ENCODE measurements at regions of chr2 and their contacts with region 1.

Region 1: DNA sequence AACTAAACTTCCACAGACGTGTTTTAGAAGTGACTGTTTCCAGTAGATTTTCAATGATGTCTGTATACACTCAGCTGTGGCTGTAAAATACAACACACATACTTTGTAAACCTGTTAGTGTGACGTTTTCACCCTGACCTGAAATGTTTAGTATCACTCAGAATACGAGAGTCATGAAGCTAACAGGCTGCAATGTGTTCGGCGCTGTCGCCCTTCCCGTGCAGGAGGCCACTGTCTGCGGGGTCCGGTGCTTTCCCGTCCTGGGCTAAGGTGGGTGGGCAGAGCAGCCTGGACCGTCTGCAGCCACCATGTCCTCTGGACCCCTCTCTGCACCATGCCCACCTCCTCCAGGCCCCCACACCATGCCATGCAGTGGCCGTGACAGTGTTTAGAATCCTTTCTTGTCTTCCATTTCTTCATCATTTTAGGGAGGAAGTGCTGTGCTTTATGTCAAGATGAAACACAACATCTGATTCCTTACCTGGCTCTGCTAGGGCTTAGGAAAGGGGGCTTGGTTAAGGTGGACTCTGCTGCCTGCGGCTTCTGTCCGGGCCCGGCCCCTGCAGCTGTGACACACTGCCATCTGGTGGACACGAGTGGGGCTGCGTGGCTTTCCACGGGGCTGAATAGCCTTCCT is 53.8 kb upstream of the RBM44 start:
- DNase-seq: peak; percentile 75 to 86
- H3K4me3 ChIP-seq: no peak overlapping the region
- H3K27ac ChIP-seq: peak overlapping the region; percentile 68 to 77
- H3K4me1 ChIP-seq: peaks cover 4 to 61% (median 45%) of the 10 kb centered on the region in 4 donors
- H3K27me3 ChIP-seq: no peaks in the 10 kb centered on the region
- CTCF ChIP-seq: peak; percentile 96 to 98

Region 2: GRCh38 chr2:237585590-237586221 is 159.0 kb before region 1 on chr2:
- intact Hi-C with region 1: loop called (anchors 2 kb)
- DNase-seq: no peak
- H3K4me3 ChIP-seq: no peak overlapping the region
- H3K27ac ChIP-seq: no peak overlapping the region
- H3K4me1 ChIP-seq: peaks cover 0 to 25% (median 19%) of the 10 kb centered on the region in 4 donors
- H3K27me3 ChIP-seq: no peaks in the 10 kb centered on the region
- CTCF ChIP-seq: no peak

Region 3: DNA sequence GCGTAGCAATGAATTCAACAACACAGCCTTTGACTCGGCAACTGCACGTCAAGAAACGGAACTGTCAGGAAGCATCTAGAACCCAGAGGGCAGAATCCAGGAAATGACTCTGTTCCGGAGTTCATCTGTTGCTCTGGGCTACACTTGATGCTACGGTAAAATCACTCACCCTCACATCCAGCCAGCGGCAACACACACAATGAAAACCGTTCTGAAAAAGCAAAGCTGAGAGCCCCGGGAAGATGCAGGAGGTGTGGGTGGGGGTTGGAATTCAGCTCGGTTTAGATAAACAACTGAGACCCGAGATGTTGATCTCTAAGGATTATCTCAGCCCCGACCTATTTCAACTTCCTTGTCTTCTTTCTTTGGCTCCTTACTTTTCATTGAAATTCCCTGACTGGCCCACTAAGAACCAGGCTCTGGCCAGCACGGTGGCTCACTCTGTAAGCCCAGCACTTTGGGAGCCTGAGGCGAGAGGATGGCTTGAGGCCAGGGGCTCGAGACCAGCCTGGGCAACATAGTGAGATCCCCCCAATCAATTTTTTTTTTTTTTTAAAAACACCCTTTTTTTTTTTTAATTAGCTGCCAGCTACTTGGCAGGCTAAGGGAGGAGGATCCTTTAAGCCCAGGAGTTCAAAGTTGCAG is 140.9 kb before region 1 on chr2:
- intact Hi-C with region 1: loop called (anchors 5 kb)
- DNase-seq: peak in 1 of 2 donors; percentile 61
- H3K4me3 ChIP-seq: no peak overlapping the region
- H3K27ac ChIP-seq: peak overlapping the region; percentile 28 to 39
- H3K4me1 ChIP-seq: peaks cover 0 to 33% (median 15%) of the 10 kb centered on the region in 4 donors
- H3K27me3 ChIP-seq: no peaks in the 10 kb centered on the region
- CTCF ChIP-seq: no peak

Region 4: DNA sequence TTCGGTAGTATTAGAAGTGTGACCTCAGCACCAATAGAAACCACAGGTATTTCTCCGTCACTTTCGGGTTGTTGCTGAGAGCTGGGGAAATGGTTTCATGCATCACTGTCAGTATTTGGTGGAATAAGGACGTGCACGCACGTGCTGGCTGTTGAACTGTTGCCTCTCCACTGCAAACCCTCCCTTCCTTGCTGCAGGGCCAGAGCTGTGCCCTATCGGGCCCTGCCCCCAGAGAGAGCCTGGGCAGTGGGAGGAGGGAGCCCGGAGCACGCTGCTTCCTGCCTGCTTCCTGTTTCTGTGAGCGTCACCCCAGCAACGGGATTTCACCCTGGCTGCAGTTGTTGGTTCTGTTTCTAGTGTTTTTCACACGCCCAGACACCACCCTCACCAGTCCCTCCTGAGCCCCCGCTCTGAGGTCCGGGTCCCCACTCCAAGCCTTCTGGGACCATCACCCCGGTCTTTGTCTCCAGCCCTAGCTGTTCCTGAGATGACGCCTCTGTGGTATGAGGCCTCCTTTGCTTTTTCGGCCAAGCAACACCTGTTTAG is 69.9 kb before region 1 on chr2:
- intact Hi-C with region 1: loop called (anchors 5 kb)
- DNase-seq: peak; percentile 92 to 94
- H3K4me3 ChIP-seq: peak overlapping the region; percentile 30 to 38
- H3K27ac ChIP-seq: peak overlapping the region; percentile 84 to 85
- H3K4me1 ChIP-seq: peaks cover 8 to 85% (median 44%) of the 10 kb centered on the region in 4 donors
- H3K27me3 ChIP-seq: no peaks in the 10 kb centered on the region
- CTCF ChIP-seq: peak; percentile 28 to 42